Activated naive CD8-positive, alpha-beta T cell treated with anti-CD3 and anti-CD28 coated beads, Interleukin-2, amount 10 ng/mL, durations not matched to agents 7 days and 5 days (primary cell): ENCODE measurements at regions of chr12 and their contacts with region 1.

Region 1: GRCh38 chr12:2812290-2813213 is at the start of gene ITFG2:
- DNase-seq: peak; percentile 92
- ATAC-seq: peak; percentile 93
- H3K4me3 Mint-ChIP-seq: peak within 1 kb of the TSS; percentile 99
- H3K27ac Mint-ChIP-seq: peak within 1 kb of the TSS; percentile 99
- H3K4me1 Mint-ChIP-seq: peaks cover 22% of the 10 kb centered on the region
- H3K27me3 Mint-ChIP-seq: no peaks in the 10 kb centered on the region
- total RNA-seq, gene ITFG2: 66.2 to 66.8 TPM

Region 2: GRCh38 chr12:2613326-2614073 is 199.1 kb before region 1 on chr12:
- POLR2A ChIA-PET with region 1: no interaction called
- DNase-seq: no peak
- ATAC-seq: no peak
- H3K4me3 Mint-ChIP-seq: no peak overlapping the region
- H3K27ac Mint-ChIP-seq: no peak overlapping the region
- H3K4me1 Mint-ChIP-seq: peaks cover 7% of the 10 kb centered on the region
- H3K27me3 Mint-ChIP-seq: peaks cover 20% of the 10 kb centered on the region

Region 3: DNA sequence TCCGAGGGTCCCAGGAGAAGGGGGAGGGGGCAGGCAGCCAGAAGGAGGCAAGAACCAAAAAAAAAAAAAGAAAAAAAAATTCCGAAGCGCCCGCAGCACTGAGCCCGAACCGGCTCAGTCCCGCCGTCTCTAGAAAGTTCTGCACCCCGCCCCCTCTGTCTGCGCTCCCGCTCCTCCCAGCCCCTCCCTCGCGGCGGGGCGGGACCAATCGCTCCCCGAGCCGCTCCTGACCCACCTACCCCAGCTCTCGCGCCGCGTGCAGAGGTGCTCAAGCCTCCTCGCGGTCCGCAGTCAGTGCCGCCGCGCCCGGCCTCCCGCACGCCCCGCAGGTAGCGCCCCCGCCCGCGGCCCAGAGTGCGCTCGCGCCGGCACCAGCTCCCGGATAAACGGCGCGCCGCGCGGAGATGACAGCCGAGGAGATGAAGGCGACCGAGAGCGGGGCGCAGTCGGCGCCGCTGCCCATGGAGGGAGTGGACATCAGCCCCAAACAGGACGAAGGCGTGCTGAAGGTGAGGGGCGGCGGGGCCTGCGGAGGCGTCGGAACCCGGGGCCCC is 17.7 kb before region 1 on chr12 and contains the start of gene FKBP4:
- POLR2A ChIA-PET with region 1: interaction called, 23 read pairs
- DNase-seq: peak; percentile 90
- ATAC-seq: peak; percentile 87
- H3K4me3 Mint-ChIP-seq: peak within 1 kb of the TSS; percentile 87
- H3K27ac Mint-ChIP-seq: peak within 1 kb of the TSS; percentile 63
- H3K4me1 Mint-ChIP-seq: peaks cover 30% of the 10 kb centered on the region
- H3K27me3 Mint-ChIP-seq: peaks cover 7% of the 10 kb centered on the region
- total RNA-seq, gene FKBP4: 62.3 to 67.7 TPM